ENCODE measurements at regions of chr20 and their contacts with region 1.

Region 1: DNA sequence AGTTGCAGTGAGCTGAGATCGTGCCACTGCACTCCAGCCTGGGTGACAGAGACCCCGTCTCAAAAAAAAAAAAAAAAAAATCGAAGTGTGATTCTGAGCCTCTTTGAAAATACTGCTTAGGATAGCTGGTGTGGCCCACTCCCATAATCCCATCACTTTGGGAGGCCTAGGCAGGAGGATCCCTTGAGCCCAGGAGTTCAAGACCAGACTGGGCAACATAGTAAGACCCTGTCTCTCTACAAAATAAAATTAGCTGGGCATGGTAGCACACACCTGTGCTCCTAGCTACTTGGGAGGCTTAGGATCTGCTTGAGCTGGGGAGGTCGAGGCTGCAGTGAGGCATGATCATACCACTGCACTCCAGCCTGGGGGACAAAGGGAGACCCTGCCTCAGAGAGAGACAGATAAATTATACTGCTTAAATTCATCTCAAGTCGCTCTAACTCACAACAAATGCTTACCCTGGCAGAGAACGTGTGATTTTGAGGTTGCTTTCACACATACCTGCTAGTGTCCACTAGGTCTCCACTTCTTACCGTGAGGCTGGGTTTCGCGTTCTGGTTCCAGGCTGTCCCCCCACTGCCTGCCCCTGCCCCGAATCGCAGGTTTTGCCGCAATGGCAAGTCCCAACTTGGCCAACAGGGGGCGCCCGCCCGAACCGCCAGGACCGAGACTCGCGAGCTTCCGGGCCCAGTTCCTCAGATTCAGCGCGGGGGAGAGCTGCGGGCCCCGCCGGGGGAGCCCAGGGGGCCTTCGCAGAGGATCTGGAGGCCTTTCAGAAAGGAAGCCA is 12.3 kb upstream of the TMC2 start:
- DNase-seq: peak; percentile 92
- H3K4me3 ChIP-seq: peak overlapping the region; percentile 65 to 87 (median 72)
- H3K27ac ChIP-seq: peak overlapping the region; percentile 78 to 91 (median 89)
- H3K4me1 ChIP-seq: peaks cover 0 to 11% (median 5%) of the 10 kb centered on the region in 4 donors
- H3K27me3 ChIP-seq: no peaks in the 10 kb centered on the region
- CTCF ChIP-seq: peak; percentile 89 to 99 (median 93)
- EP300 ChIP-seq: no peak
- POLR2A ChIP-seq: peak; percentile 39 to 56

Region 2: DNA sequence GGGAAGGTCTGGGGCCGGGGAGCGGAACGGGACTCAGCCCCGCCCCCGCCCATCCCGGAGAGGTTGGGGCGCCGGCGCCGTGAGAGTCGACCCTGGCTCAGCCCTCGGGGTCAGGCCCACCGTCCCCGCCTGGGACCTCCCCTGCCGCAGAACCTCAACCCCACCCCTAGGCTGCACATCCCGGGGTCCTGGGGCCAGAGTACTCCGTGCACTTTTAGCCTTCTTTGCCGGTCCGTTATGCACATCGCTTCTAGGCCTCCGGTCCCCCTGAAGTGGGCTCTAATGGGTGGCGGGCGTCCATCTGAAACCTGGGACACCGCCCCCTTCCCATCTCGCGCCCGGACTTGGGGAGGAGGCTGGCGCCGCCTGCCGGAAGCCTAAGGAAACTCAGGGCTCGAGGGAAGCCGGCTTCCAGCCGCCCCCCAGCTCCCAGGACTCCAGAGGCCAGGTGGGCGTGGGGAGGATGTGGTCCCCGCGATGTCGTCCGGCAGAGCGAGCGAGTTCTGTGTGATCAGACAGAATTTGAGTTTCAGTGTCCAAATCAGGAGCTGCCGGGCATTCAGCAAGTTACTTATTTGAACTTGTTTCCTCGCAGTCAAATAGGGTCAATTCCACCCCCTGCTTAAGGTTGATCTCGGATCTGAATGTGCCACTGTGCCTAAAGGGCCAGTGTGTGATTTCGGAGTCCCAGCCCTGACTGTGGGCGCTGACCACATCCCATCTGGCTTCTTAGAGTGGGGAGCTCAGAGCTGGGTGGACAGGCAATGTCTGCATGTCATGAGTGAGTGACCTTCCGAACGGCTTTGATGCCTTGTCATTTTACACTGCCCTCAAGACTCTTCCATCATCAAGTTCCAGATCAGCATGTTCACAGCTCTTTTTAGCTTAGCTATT is 228.7 kb after region 1 on chr20:
- intact Hi-C with region 1: loop called (anchors 5 kb)
- DNase-seq: peak; percentile 68
- H3K4me3 ChIP-seq: peak overlapping the region; percentile 23 to 47 (median 42)
- H3K27ac ChIP-seq: no peak overlapping the region
- H3K4me1 ChIP-seq: peaks cover 0 to 37% (median 31%) of the 10 kb centered on the region in 4 donors
- H3K27me3 ChIP-seq: peaks cover 3 to 57% (median 40%) of the 10 kb centered on the region in 3 donors
- CTCF ChIP-seq: peak in 3 of 4 experiments; percentile 30 to 46 (median 38)
- EP300 ChIP-seq: no peak
- POLR2A ChIP-seq: no peak

Region 3: DNA sequence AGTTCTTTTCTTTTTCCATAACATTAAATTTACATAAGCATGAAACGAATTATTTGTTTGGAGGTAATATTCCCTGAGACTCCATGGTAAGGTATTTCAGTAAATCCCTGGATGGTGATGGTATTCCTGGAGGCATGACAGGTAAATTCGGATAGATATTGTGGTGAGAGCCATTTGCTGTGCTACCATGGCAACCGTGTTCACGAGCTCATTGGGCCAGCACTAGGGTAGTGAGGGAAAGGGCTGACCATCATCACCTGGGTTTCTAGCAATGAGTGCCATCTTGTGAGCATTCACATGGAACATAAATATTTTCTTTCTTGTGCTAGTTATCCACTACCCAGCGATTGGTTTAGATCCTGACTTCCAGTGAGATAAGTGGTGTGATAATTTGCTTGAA is 467.4 kb after region 1 on chr20:
- intact Hi-C with region 1: loop called (anchors 10 kb)
- DNase-seq: no peak
- H3K4me3 ChIP-seq: no peak overlapping the region
- H3K27ac ChIP-seq: no peak overlapping the region
- H3K4me1 ChIP-seq: no peaks in the 10 kb centered on the region
- H3K27me3 ChIP-seq: no peaks in the 10 kb centered on the region
- CTCF ChIP-seq: no peak
- EP300 ChIP-seq: no peak
- POLR2A ChIP-seq: no peak

Measured in sigmoid colon (tissue), 7 donors.